Activated CD4-positive, alpha-beta T cell treated with anti-CD3 and anti-CD28 coated beads for 36 hours (primary cell): ENCODE measurements at regions of chr6 and their contacts with region 1.

Region 1: GRCh38 chr6:44338228-44339122 is 4.0 kb upstream of the SPATS1 start:
- DNase-seq: peak; percentile 81
- ATAC-seq: peak; percentile 84
- H3K4me3 Mint-ChIP-seq: no peak overlapping the region
- H3K27ac Mint-ChIP-seq: no peak overlapping the region
- H3K4me1 Mint-ChIP-seq: peaks cover 5% of the 10 kb centered on the region
- H3K27me3 Mint-ChIP-seq: peaks cover 15% of the 10 kb centered on the region

Region 2: DNA sequence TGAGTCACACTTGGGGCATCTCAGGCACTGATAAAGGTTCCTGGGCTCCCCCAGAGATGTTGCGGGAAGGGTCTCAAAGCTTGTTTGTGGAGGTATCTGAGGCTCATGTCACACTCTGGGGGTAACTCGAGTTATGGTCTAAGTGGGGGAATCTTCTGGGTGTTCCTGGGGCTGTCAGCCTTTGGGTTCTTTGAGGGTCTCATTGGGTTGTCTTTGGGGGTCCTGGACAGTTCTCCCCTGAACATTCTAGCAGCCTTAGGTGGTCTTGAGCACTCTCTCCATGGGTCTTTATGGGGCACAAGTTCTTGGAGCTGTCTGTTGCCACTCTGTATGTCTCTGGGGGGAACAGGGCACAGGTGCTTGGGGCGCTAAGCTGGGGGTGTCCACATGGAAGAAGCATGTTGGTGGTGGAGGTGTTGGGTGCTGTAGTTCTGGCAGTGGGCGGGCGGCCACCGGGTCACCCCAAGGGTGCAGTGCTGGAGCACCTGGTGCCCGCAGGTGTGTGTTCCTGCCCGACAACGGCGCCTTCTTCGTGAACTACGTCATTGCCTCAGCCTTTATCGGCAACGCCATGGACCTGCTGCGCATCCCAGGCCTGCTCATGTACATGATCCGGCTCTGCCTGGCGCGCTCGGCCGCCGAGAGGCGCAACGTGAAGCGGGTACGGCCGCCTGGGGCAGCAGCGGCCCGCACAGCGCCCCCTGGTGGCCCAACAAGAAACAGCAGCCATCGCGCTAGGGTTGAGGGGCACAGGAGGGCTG is 186.9 kb before region 1 on chr6:
- CTCF ChIA-PET with region 1: no interaction called
- POLR2A ChIA-PET with region 1: no interaction called
- intact Hi-C with region 1: loop called in 1 of 2 experiments (anchors 5 kb)
- DNase-seq: peak; percentile 90
- ATAC-seq: peak; percentile 96
- H3K4me3 Mint-ChIP-seq: no peak overlapping the region
- H3K27ac Mint-ChIP-seq: no peak overlapping the region
- H3K4me1 Mint-ChIP-seq: peaks cover 5% of the 10 kb centered on the region
- H3K27me3 Mint-ChIP-seq: no peaks in the 10 kb centered on the region

Region 3: DNA sequence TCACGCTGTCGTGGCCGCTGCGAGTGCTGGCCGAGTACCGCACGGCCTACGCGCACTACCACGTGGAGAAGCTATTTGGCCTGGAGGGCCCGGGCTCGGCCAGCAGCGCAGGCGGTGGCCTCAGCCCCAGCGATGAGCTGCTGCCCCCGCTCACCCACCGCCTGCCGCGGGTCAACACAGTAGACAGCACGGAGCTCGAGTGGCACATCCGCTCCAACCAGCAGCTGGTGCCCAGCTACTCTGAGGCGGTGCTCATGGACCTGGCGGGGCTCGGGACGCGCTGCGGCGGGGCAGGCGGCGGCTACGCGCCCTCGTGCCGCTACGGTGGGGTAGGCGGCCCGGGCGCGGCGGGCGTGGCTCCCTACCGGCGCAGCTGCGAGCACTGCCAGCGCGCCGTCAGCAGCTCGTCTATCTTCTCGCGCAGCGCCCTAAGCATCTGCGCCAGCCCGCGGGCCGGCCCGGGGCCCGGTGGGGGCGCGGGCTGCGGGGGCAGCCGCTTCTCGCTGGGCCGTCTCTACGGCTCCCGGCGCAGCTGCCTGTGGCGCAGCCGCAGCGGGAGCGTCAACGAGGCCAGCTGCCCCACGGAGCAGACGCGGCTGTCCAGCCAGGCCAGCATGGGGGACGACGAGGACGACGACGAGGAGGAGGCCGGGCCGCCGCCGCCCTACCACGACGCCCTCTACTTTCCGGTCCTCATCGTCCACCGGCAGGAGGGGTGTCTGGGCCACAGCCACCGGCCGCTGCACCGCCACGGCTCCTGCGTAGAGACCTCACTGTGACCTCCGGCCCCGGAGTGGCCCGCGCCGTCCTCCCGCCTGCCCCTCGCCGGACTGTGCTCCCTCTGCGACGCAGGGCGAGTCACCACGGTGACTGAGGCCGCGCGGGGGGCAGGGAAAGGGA is 62.5 kb before region 1 on chr6:
- CTCF ChIA-PET with region 1: interaction called, 14 read pairs
- POLR2A ChIA-PET with region 1: no interaction called
- intact Hi-C with region 1: no loop called
- DNase-seq: peak; percentile 54
- ATAC-seq: peak; percentile 75
- H3K4me3 Mint-ChIP-seq: no peak overlapping the region
- H3K27ac Mint-ChIP-seq: no peak overlapping the region
- H3K4me1 Mint-ChIP-seq: no peaks in the 10 kb centered on the region
- H3K27me3 Mint-ChIP-seq: peaks cover 50% of the 10 kb centered on the region